Panc1 (cell line): ENCODE measurements at regions of chr9 and their contacts with region 1.

Region 1: DNA sequence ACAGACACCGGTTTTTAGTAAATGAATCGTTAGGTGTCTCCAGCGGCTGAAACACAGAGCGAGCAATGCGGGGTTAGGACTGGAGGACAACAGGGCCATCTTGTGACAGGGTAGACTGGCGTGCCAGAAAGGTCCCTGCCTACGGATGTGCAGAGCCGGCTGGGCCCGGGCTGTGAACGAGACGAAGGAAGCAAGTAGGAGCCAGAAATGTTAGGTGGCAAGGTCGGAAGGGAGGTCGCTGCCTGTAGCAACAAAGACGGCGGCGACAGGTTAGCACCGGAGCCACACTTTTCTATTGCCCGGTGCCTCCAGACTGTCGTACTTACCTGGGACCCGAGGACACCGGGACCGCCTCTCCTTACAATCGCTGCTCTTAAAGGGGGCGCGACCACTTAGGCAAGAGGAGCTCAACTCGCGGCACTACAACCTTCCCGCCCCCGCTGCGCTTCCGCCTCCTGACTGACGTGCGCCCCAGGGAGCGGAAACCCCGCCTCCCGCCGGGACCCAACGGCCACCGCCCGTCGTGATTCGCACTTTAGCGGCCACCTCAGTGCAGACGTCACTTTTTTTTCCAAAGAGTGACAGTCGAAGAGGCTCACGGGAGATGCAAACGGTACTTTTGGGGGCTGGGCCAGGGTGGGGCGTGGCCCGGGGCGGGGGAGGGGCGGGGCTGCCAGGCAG is at the start of gene INIP:
- DNase-seq: peak; percentile 70
- ATAC-seq: peak; percentile 98
- H3K4me3 ChIP-seq: peak within 1 kb of the TSS; percentile 91 to 93
- H3K27ac ChIP-seq: peak within 1 kb of the TSS; percentile 89
- H3K4me1 ChIP-seq: no peaks in the 10 kb centered on the region; the same call in 1 of the 2 replicates
- H3K27me3 ChIP-seq: no peaks in the 10 kb centered on the region
- CTCF ChIP-seq: no peak
- total RNA-seq, gene INIP: 20.0 TPM

Region 2: GRCh38 chr9:112793213-112793810 is 75.5 kb after region 1 on chr9:
- CTCF ChIA-PET with region 1: interaction called, 3 read pairs
- POLR2A ChIA-PET with region 1: no interaction called
- in situ Hi-C with region 1: no loop called
- intact Hi-C with region 1: loop called (anchors 10 kb)
- DNase-seq: peak; percentile 69
- ATAC-seq: peak; percentile 96
- H3K4me3 ChIP-seq: no peak overlapping the region
- H3K27ac ChIP-seq: no peak overlapping the region
- H3K4me1 ChIP-seq: no peaks in the 10 kb centered on the region; the same call in 1 of the 2 replicates
- H3K27me3 ChIP-seq: no peaks in the 10 kb centered on the region
- CTCF ChIP-seq: peak; percentile 91